ENCODE measurements at regions of chr2 and their contacts with region 1.

Region 1: GRCh38 chr2:23824777-23825212 is 102.1 kb downstream of the ATAD2B start:
- DNase-seq: no peak
- H3K4me3 ChIP-seq: no peak overlapping the region
- H3K27ac ChIP-seq: no peak overlapping the region
- H3K4me1 ChIP-seq: no peaks in the 10 kb centered on the region
- H3K27me3 ChIP-seq: no peaks in the 10 kb centered on the region
- CTCF ChIP-seq: peak in 2 of 3 experiments; percentile 22 to 59; a peak in 2 of 4 replicates
- EP300 ChIP-seq: no peak
- POLR2A ChIP-seq: no peak
- RAD21 ChIP-seq: peak; percentile 56 to 57

Region 2: DNA sequence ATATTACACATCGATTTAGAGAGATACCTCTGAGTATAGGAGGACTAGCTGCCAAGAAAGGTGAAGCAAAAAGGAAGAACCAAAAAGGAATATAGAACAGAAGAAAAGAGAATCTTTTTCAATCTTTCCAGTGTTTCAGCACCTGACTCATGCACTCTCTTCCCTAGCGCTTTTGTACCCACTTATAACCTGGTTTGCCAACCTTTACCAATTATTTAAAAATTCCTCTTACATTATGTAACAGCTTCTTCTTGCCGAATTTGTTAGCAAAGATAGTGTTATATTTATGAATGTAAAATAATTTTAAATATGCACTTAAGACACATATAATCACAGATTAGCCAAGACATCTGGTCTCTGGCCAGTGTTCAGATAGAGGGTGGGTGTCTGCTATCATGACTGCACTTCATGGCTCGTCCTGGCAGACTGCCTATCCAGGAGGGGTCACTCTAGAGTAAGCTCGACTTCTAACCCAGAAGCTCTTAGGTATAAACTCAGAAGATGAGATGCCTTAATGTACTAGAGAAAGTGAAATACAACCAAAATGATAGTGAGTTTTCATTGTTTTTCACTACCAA is 20.7 kb before region 1 on chr2:
- CTCF ChIA-PET with region 1: interaction called, 11 read pairs
- POLR2A ChIA-PET with region 1: interaction called, 3 read pairs
- DNase-seq: no peak
- H3K4me3 ChIP-seq: no peak overlapping the region
- H3K27ac ChIP-seq: no peak overlapping the region
- H3K4me1 ChIP-seq: no peaks in the 10 kb centered on the region
- H3K27me3 ChIP-seq: no peaks in the 10 kb centered on the region
- CTCF ChIP-seq: peak; percentile 45 to 71 (median 61)
- EP300 ChIP-seq: no peak
- POLR2A ChIP-seq: no peak
- RAD21 ChIP-seq: peak; percentile 42 to 47; a peak in 3 of 4 replicates

Region 3: GRCh38 chr2:23835988-23836387 is 11.2 kb after region 1 on chr2:
- CTCF ChIA-PET with region 1: interaction called, 23 read pairs
- POLR2A ChIA-PET with region 1: no interaction called
- DNase-seq: no peak
- H3K4me3 ChIP-seq: no peak overlapping the region
- H3K27ac ChIP-seq: no peak overlapping the region
- H3K4me1 ChIP-seq: no peaks in the 10 kb centered on the region
- H3K27me3 ChIP-seq: no peaks in the 10 kb centered on the region
- CTCF ChIP-seq: no peak
- EP300 ChIP-seq: no peak
- POLR2A ChIP-seq: no peak
- RAD21 ChIP-seq: no peak

Region 4: GRCh38 chr2:23843051-23843976 is 18.5 kb after region 1 on chr2:
- CTCF ChIA-PET with region 1: interaction called, 11 read pairs
- POLR2A ChIA-PET with region 1: interaction called, 3 read pairs
- DNase-seq: no peak
- H3K4me3 ChIP-seq: no peak overlapping the region
- H3K27ac ChIP-seq: no peak overlapping the region
- H3K4me1 ChIP-seq: no peaks in the 10 kb centered on the region
- H3K27me3 ChIP-seq: no peaks in the 10 kb centered on the region
- CTCF ChIP-seq: no peak
- EP300 ChIP-seq: no peak
- POLR2A ChIP-seq: no peak
- RAD21 ChIP-seq: no peak

Region 5: DNA sequence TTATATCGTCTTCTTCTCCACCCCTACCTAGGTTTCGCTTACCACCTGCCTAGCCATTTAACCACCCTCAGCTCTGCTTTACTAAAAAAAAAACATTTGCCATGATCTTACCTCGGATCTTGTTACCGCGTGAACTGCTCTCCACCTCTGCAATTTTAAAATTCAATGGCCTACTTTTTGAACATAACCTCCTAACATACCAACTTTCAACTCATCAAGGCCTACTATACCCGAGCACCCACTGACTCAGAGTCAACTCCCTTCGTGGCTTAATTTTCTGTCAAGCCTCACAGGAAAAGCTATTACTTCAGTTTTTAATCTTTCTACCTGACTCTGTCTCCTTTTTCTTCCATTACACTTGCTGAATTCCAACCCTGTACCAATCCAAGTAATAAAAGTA is 46.4 kb after region 1 on chr2:
- CTCF ChIA-PET with region 1: interaction called, 11 read pairs
- POLR2A ChIA-PET with region 1: no interaction called
- DNase-seq: no peak
- H3K4me3 ChIP-seq: no peak overlapping the region
- H3K27ac ChIP-seq: no peak overlapping the region
- H3K4me1 ChIP-seq: no peaks in the 10 kb centered on the region
- H3K27me3 ChIP-seq: no peaks in the 10 kb centered on the region
- CTCF ChIP-seq: no peak
- EP300 ChIP-seq: no peak
- POLR2A ChIP-seq: no peak
- RAD21 ChIP-seq: no peak

Region 6: DNA sequence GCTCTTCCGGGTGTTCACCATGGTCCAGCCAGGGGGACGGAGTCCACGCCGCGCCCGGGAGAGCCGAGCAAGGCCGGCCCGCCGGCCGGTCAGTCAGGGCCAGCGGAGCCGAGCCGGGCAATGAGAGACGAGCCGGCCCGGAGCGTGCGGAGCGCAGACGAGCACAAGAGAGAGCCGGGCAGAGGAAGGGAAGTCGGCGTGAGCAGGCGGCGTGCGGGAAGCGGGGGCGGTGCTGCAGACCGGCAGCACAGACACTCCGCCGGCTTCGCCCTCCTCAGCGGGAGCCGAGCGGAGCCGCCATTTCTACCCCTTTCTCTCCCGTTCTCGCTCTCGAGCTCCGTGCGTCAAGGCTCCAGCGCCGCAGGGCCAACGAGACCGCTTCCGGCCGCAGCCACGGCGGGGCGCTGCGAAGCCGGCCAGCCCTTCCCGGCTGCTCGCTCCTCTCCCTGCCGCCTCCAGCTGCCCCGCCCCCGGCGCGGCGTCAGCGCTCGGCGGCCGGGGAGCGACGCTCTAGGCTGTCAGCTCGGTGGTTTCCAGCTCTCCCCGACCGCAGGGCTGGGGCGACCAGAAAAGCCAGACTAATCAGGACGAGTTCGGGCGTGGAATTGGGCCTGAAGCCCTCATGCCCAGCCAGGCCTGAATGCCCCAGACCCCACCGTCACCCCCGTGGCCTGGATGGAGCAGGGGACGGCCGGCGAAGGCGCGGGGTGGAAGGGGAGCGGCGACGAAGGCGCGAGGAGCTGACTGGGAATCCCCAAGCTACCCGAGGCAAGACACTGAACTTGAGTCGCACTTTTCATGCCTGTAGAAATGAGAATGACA is 102.2 kb after region 1 on chr2 and contains the start of gene ATAD2B:
- CTCF ChIA-PET with region 1: interaction called, 24 read pairs
- POLR2A ChIA-PET with region 1: no interaction called
- DNase-seq: peak; percentile 85 to 97
- H3K4me3 ChIP-seq: peak within 1 kb of the TSS; percentile 69 to 90 (median 82)
- H3K27ac ChIP-seq: peak within 1 kb of the TSS; percentile 87
- H3K4me1 ChIP-seq: peaks cover 0 to 2% (median under 1%) of the 10 kb centered on the region in 4 experiments; a peak in 3 of 7 replicates
- H3K27me3 ChIP-seq: no peaks in the 10 kb centered on the region
- CTCF ChIP-seq: peak; percentile 87 to 96 (median 87)
- EP300 ChIP-seq: 0 out of 3 replicates have a peak, but pooled peaks of 1 of the 2 experiments have one; percentile 80
- POLR2A ChIP-seq: peak; percentile 85 to 94
- RAD21 ChIP-seq: peak; percentile 75 to 83
- total RNA-seq, gene ATAD2B: 15.3 and 16.1 TPM in 2 replicates

Region 7: DNA sequence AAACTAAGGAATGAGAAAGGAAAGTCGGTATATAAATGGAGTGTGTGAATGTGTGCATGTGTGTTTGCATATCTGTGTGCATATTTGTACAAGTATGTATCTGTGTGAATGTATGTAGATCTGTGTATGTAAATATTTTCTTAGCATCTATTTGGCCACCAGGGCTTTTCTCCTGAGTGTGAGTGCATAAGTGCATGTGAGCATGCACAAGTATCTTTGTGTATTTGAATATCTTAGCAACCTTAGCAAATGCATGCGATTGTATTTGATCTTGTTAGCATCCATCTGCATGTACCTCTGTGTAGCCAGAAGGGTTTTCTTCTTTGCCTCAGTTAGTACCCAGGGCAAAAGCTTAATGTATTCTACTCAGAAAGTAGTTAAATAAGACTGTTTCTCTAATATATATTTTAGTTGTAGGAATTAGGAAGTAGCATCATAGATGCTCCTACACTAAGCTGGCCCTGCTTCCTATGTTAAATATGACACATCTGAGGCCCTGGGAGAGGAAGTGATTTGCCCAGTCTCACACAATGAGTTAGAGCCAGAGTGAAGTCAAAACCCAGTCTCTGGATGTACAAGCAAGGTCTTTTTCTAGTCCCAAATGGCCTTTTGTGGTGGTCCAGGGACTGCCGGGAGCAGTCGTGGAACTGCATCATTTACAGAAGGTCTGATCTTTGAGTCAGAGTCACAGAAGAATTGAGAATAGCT is 233.9 kb after region 1 on chr2:
- CTCF ChIA-PET with region 1: interaction called, 14 read pairs
- POLR2A ChIA-PET with region 1: no interaction called
- DNase-seq: no peak
- H3K4me3 ChIP-seq: no peak overlapping the region
- H3K27ac ChIP-seq: no peak overlapping the region
- H3K4me1 ChIP-seq: no peaks in the 10 kb centered on the region
- H3K27me3 ChIP-seq: no peaks in the 10 kb centered on the region
- CTCF ChIP-seq: no peak
- EP300 ChIP-seq: no peak
- POLR2A ChIP-seq: no peak
- RAD21 ChIP-seq: no peak

Region 8: DNA sequence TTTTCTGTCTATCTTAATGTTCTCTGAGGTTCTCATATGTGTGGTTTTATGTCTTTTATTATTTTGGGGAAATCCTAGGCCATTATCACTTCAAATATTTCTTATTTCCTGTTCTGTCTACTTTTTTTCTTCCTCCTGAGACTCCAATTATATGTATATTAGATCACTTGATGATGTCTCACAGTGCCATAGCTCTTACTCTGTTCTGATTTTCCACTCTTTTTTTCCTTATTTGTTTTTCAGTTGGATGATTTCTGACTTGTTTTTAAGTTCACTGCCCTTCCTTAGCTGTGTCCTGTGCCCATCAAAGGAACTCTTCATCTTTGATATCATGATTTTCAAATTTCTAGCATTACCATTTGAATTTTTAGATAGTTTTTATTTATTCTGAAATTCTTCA is 322.6 kb after region 1 on chr2:
- CTCF ChIA-PET with region 1: no interaction called
- POLR2A ChIA-PET with region 1: no interaction called
- DNase-seq: no peak
- H3K4me3 ChIP-seq: no peak overlapping the region
- H3K27ac ChIP-seq: no peak overlapping the region
- H3K4me1 ChIP-seq: no peaks in the 10 kb centered on the region
- H3K27me3 ChIP-seq: peaks cover 0 to 1% (median 0%) of the 10 kb centered on the region in 4 experiments; a peak in 1 of 7 replicates
- CTCF ChIP-seq: no peak
- EP300 ChIP-seq: no peak
- POLR2A ChIP-seq: no peak
- RAD21 ChIP-seq: no peak

Measured in H1 (cell line).